ENCODE measurements at regions of chr3 and their contacts with region 1.

Region 1: GRCh38 chr3:31695280-31696008 is 162.7 kb downstream of the STT3B start:
- DNase-seq: no peak
- H3K4me3 ChIP-seq: no peak overlapping the region
- H3K27ac ChIP-seq: no peak overlapping the region
- H3K4me1 ChIP-seq: no peaks in the 10 kb centered on the region
- H3K27me3 ChIP-seq: no peaks in the 10 kb centered on the region
- CTCF ChIP-seq: peak; percentile 38; the same call in 1 of the 2 replicates

Region 2: GRCh38 chr3:31802981-31803740 is 107.7 kb after region 1 on chr3:
- CTCF ChIA-PET with region 1: interaction called, 10 read pairs
- POLR2A ChIA-PET with region 1: no interaction called
- intact Hi-C with region 1: no loop called
- DNase-seq: no peak
- H3K4me3 ChIP-seq: no peak overlapping the region
- H3K27ac ChIP-seq: no peak overlapping the region
- H3K4me1 ChIP-seq: no peaks in the 10 kb centered on the region
- H3K27me3 ChIP-seq: no peaks in the 10 kb centered on the region
- CTCF ChIP-seq: no peak